Natural killer cell (primary cell): ENCODE measurements at regions of chr14 and their contacts with region 1.

Region 1: GRCh38 chr14:60151715-60152114 is 13.5 kb downstream of the DHRS7 start:
- DNase-seq: peak; percentile 68 to 83
- ATAC-seq: peak; percentile 92 to 98 (median 97)
- H3K4me3 ChIP-seq: no peak overlapping the region
- H3K4me3 Mint-ChIP-seq: peak overlapping the region; percentile 71
- H3K27ac ChIP-seq: peak overlapping the region; percentile 77
- H3K27ac Mint-ChIP-seq: peak overlapping the region; percentile 96 to 97
- H3K4me1 ChIP-seq: peaks cover 28% of the 10 kb centered on the region
- H3K4me1 Mint-ChIP-seq: peaks cover 52% of the 10 kb centered on the region in 2 donors
- H3K27me3 ChIP-seq: no peaks in the 10 kb centered on the region
- H3K27me3 Mint-ChIP-seq: no peaks in the 10 kb centered on the region
- CTCF ChIP-seq: no peak

Region 2: GRCh38 chr14:60164712-60165546 is 13.2 kb after region 1 on chr14 and contains the start of gene DHRS7:
- intact Hi-C with region 1: loop called (anchors 1 kb)
- DNase-seq: peak; percentile 72 to 85
- ATAC-seq: peak; percentile 80 to 95 (median 89)
- H3K4me3 ChIP-seq: peak within 1 kb of the TSS; percentile 98
- H3K4me3 Mint-ChIP-seq: peak within 1 kb of the TSS; percentile 96
- H3K27ac ChIP-seq: peak within 1 kb of the TSS; percentile 98
- H3K27ac Mint-ChIP-seq: peak within 1 kb of the TSS; percentile 98
- H3K4me1 ChIP-seq: peaks cover 37% of the 10 kb centered on the region
- H3K4me1 Mint-ChIP-seq: peaks cover 51 to 53% of the 10 kb centered on the region in 2 donors
- H3K27me3 ChIP-seq: no peaks in the 10 kb centered on the region
- H3K27me3 Mint-ChIP-seq: no peaks in the 10 kb centered on the region
- CTCF ChIP-seq: peak; percentile 11
- total RNA-seq, gene DHRS7: 115 to 139 (median 126) TPM